Panc1 (cell line): ENCODE measurements at regions of chr20 and their contacts with region 1.

Region 1: DNA sequence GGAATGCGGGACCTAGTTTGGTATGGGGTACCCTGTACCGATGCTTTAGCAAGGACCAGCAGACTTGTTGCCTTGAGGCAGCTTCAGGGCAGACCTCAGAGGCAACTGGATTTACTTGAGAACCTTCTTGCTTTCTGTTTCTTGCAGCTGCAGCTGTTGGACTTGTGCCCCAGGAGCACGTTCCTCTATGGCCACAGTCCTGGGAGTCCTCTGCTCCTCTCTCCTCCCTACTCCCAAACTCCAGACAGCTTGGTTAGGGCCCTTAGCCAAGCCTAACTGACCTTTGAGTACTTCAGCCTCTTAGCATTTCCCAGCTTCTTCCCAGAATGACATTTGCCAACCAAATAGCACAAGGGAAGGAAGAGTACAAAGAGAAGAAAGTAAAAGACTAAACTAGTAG is 34.7 kb downstream of the GHRH start:
- DNase-seq: no peak
- ATAC-seq: no peak
- H3K4me3 ChIP-seq: no peak overlapping the region
- H3K27ac ChIP-seq: no peak overlapping the region
- H3K4me1 ChIP-seq: no peaks in the 10 kb centered on the region
- H3K27me3 ChIP-seq: no peaks in the 10 kb centered on the region
- CTCF ChIP-seq: no peak

Region 2: GRCh38 chr20:37198932-37199660 is 27.8 kb before region 1 on chr20:
- CTCF ChIA-PET with region 1: no interaction called
- POLR2A ChIA-PET with region 1: interaction called, 12 read pairs
- in situ Hi-C with region 1: no loop called
- intact Hi-C with region 1: no loop called
- DNase-seq: no peak
- ATAC-seq: no peak
- H3K4me3 ChIP-seq: no peak overlapping the region
- H3K27ac ChIP-seq: no peak overlapping the region
- H3K4me1 ChIP-seq: peaks cover 6% of the 10 kb centered on the region
- H3K27me3 ChIP-seq: no peaks in the 10 kb centered on the region
- CTCF ChIP-seq: no peak

Region 3: GRCh38 chr20:37327748-37328147 is 100.9 kb after region 1 on chr20:
- CTCF ChIA-PET with region 1: no interaction called
- POLR2A ChIA-PET with region 1: no interaction called
- in situ Hi-C with region 1: no loop called
- intact Hi-C with region 1: no loop called
- DNase-seq: no peak
- ATAC-seq: no peak
- H3K4me3 ChIP-seq: no peak overlapping the region
- H3K27ac ChIP-seq: no peak overlapping the region
- H3K4me1 ChIP-seq: no peaks in the 10 kb centered on the region
- H3K27me3 ChIP-seq: no peaks in the 10 kb centered on the region
- CTCF ChIP-seq: no peak